ENCODE measurements at regions of chr6 and their contacts with region 1.

Region 1: DNA sequence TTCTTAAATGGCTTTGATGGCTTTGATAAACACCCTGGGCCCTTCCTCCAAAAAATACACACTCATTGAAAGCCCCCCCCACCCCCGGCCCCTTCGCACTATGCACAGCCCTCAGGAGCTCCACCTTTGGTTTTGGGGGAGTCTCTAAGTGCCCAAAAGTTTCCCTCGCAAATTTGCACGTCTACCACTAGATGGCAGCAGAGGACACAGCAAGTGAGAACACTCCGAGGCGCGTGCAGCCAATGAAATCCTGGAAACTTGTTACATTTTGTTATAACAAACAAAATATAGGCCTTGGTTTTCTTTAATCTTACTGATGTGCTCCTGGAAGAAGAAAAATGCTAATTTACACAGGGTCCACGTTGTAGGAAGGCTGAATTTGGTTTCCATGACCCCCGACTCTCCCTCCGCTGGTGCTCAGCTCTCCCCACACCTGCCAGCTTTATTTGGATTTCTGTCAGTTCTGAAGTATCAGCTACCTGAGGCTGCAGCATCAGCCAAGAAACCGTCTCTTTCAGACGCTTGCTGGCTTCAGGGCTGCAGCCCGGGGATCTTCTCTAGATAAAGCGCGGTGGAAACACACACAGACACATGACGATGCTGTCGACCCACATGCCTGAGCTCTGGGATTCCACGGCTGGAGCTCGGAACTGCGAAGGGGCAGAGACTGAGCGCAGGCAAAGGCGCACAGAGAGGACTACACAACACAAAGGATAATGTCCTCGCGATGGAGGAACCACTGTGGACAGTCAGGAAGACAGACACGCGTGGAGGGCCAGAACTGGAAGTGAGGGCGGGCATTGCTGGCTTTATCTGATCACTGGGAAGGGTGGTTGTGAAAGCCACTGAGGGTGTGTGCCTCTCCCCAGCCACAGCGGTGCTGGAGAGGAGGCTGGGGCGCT is 148.4 kb upstream of the RPS6KA2 start:
- DNase-seq: peak; percentile 77
- H3K4me3 Mint-ChIP-seq: no peak overlapping the region
- H3K27ac Mint-ChIP-seq: no peak overlapping the region
- H3K4me1 Mint-ChIP-seq: peaks cover 6% of the 10 kb centered on the region
- H3K27me3 Mint-ChIP-seq: peaks cover 5% of the 10 kb centered on the region

Region 2: GRCh38 chr6:166275714-166276166 is 499.7 kb before region 1 on chr6:
- CTCF ChIA-PET with region 1: no interaction called
- intact Hi-C with region 1: loop called (anchors 10 kb)
- DNase-seq: peak; percentile 78
- H3K4me3 Mint-ChIP-seq: no peak overlapping the region
- H3K27ac Mint-ChIP-seq: no peak overlapping the region
- H3K4me1 Mint-ChIP-seq: peaks cover 3% of the 10 kb centered on the region
- H3K27me3 Mint-ChIP-seq: no peaks in the 10 kb centered on the region

Region 3: GRCh38 chr6:166757232-166758135 is 17.9 kb before region 1 on chr6:
- CTCF ChIA-PET with region 1: interaction called, 11 read pairs
- intact Hi-C with region 1: no loop called
- DNase-seq: peak; percentile 62
- H3K4me3 Mint-ChIP-seq: peak overlapping the region; percentile 45
- H3K27ac Mint-ChIP-seq: no peak overlapping the region
- H3K4me1 Mint-ChIP-seq: peaks cover 34% of the 10 kb centered on the region
- H3K27me3 Mint-ChIP-seq: peaks cover 7% of the 10 kb centered on the region

Region 4: GRCh38 chr6:167141667-167142432 is 366.4 kb after region 1 on chr6:
- CTCF ChIA-PET with region 1: interaction called, 21 read pairs
- intact Hi-C with region 1: loop called (anchors 1 kb)
- DNase-seq: peak; percentile 62
- H3K4me3 Mint-ChIP-seq: no peak overlapping the region
- H3K27ac Mint-ChIP-seq: no peak overlapping the region
- H3K4me1 Mint-ChIP-seq: peaks cover 2% of the 10 kb centered on the region
- H3K27me3 Mint-ChIP-seq: peaks cover 4% of the 10 kb centered on the region

Region 5: DNA sequence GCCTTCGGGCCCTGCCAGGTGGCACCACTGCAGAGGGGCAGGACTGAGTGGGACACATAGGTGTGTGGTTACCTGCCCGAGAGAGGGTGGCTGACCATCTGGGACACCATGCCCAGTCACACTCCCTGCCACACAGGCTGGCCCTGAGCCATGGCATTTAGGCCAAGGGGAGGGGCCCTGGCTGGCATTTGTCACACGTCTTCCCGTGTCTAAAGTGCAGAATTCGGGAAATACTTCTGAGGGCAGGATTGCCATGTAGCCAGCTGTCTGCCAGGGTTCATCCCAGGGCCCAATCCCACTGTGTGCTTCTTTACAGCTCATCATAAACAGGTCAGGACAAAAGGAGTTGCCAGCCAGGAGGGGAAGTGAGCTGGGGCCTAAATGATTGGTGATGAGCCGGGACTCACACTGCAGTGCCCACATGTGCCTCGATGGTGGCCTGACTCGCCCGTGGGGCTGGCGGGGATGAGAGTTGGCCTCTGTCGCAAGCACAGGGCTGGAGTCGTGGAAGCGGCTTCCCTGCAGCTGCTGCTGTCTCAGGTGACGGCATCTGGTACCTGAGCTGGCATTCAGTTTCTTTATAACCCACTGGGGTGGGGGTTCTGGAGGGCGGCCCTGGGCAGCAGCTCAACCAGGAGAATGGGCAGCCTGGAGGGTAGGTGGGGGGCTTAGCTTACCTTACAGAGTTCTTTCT is 509.8 kb after region 1 on chr6:
- CTCF ChIA-PET with region 1: no interaction called
- intact Hi-C with region 1: loop called (anchors 2 kb)
- DNase-seq: no peak
- H3K4me3 Mint-ChIP-seq: no peak overlapping the region
- H3K27ac Mint-ChIP-seq: no peak overlapping the region
- H3K4me1 Mint-ChIP-seq: no peaks in the 10 kb centered on the region
- H3K27me3 Mint-ChIP-seq: no peaks in the 10 kb centered on the region

Measured in activated naive CD4-positive, alpha-beta T cell treated with anti-CD3 and anti-CD28 coated beads for 36 hours (primary cell).